ENCODE measurements at regions of chr6 and their contacts with region 1.

Region 1: DNA sequence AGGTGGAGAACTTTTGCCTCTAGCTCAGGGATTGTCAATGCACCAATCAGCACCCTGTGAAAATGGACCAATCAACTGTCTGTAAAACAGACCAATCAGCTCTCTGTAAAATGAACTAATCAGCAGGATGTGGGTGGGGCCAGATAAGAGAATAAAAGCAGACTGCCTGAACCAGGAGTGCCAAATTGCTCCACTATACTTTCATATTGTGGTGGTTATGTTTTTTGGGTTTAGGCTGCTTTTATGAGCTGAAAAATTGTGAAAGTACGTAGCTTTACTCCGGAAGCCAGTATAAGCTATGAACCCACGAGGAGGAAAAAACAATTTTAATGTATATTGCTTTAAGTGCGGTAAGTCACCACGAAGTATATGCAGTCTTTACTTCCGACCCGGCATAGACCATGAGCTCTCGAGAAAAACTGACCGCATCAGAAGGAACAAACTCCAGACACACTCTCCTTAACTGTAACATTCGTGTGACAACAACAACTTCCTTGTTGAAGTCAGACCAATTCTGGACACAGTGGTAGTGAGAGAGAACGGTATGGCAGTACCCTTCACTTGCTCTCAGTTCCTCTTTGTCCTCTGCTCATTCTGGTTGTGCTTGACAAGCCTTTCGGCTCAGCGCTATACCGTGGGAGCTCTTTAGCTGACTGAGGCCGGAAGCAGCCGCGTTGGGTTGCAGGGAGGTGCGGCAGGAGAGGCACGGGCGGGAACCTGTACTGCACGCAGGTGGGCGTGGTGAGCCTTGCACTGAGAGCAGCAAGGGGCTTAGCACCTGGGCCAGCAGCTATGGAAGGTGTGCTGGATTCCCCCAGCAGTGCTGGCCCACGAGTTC is 81.9 kb upstream of the E2F3 start:
- DNase-seq: peak; percentile 38 to 89 (median 79)
- ATAC-seq: peak; percentile 90
- H3K4me3 ChIP-seq: peak overlapping the region; percentile 68
- H3K4me3 Mint-ChIP-seq: peak overlapping the region; percentile 77 to 95 (median 90)
- H3K27ac ChIP-seq: peak overlapping the region; percentile 71
- H3K27ac Mint-ChIP-seq: peak overlapping the region; percentile 89 to 99 (median 95)
- H3K4me1 ChIP-seq: peaks cover 5 to 6% of the 10 kb centered on the region in 2 donors
- H3K4me1 Mint-ChIP-seq: peaks cover 5 to 27% (median 18%) of the 10 kb centered on the region in 7 donors
- H3K27me3 ChIP-seq: no peaks in the 10 kb centered on the region
- H3K27me3 Mint-ChIP-seq: peaks cover 0 to 18% (median 0%) of the 10 kb centered on the region in 5 donors

Region 2: GRCh38 chr6:20212392-20213217 is 107.1 kb before region 1 on chr6 and contains the start of gene MBOAT1:
- CTCF ChIA-PET with region 1: no interaction called
- POLR2A ChIA-PET with region 1: interaction called, 3 read pairs
- intact Hi-C with region 1: loop called in 1 of 2 experiments (anchors 2 kb)
- DNase-seq: peak; percentile 38 to 85 (median 54)
- ATAC-seq: peak; percentile 82
- H3K4me3 ChIP-seq: peak within 1 kb of the TSS; percentile 73
- H3K4me3 Mint-ChIP-seq: peak within 1 kb of the TSS; percentile 82 to 99 (median 96)
- H3K27ac ChIP-seq: peak within 1 kb of the TSS; percentile 62
- H3K27ac Mint-ChIP-seq: peak within 1 kb of the TSS; percentile 56 to 94 (median 91)
- H3K4me1 ChIP-seq: peaks cover 11 to 20% of the 10 kb centered on the region in 2 donors
- H3K4me1 Mint-ChIP-seq: peaks cover 18 to 41% (median 27%) of the 10 kb centered on the region in 7 donors
- H3K27me3 ChIP-seq: no peaks in the 10 kb centered on the region
- H3K27me3 Mint-ChIP-seq: peaks cover 0 to 5% (median 0%) of the 10 kb centered on the region in 5 donors
- total RNA-seq, gene MBOAT1: 6.2 to 24.7 (median 10.0) TPM

Region 3: GRCh38 chr6:20229881-20230280 is 89.9 kb before region 1 on chr6:
- CTCF ChIA-PET with region 1: no interaction called
- POLR2A ChIA-PET with region 1: no interaction called
- intact Hi-C with region 1: no loop called
- DNase-seq: no peak
- ATAC-seq: no peak
- H3K4me3 ChIP-seq: no peak overlapping the region
- H3K4me3 Mint-ChIP-seq: no peak overlapping the region
- H3K27ac ChIP-seq: no peak overlapping the region
- H3K27ac Mint-ChIP-seq: no peak overlapping the region
- H3K4me1 ChIP-seq: no peaks in the 10 kb centered on the region
- H3K4me1 Mint-ChIP-seq: no peaks in the 10 kb centered on the region
- H3K27me3 ChIP-seq: no peaks in the 10 kb centered on the region
- H3K27me3 Mint-ChIP-seq: peaks cover 0 to 16% (median 0%) of the 10 kb centered on the region in 5 donors

Region 4: DNA sequence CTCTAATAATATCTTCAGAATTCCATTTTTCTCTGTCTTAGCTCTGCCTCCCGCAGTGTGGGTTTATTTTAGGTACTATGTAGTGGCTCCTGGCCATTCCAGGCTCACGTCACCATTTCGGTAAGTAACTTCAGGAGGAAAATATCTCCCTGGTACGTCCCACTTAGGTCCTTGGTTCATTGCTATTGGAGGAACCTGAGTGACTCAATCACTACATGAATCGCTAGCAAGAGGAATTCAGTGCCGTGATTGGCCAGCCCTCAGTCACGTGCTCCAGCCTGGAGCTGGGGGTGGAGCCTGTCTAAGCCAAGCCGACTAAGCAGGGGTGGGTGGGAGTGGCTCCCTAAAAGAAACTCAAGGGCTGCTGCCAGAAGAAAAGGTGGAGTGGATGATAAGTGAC is 14.6 kb after region 1 on chr6:
- CTCF ChIA-PET with region 1: interaction called, 4 read pairs
- POLR2A ChIA-PET with region 1: interaction called, 50 read pairs
- intact Hi-C with region 1: loop called (anchors 1 to 2 kb)
- DNase-seq: no peak
- ATAC-seq: no peak
- H3K4me3 ChIP-seq: no peak overlapping the region
- H3K4me3 Mint-ChIP-seq: no peak overlapping the region
- H3K27ac ChIP-seq: no peak overlapping the region
- H3K27ac Mint-ChIP-seq: no peak overlapping the region
- H3K4me1 ChIP-seq: peaks cover 0 to 11% of the 10 kb centered on the region in 2 donors
- H3K4me1 Mint-ChIP-seq: peaks cover 12 to 39% (median 33%) of the 10 kb centered on the region in 7 donors
- H3K27me3 ChIP-seq: no peaks in the 10 kb centered on the region
- H3K27me3 Mint-ChIP-seq: peaks cover 0 to 12% (median 0%) of the 10 kb centered on the region in 5 donors

Region 5: GRCh38 chr6:20350215-20350614 is 30.5 kb after region 1 on chr6:
- CTCF ChIA-PET with region 1: no interaction called
- POLR2A ChIA-PET with region 1: interaction called, 10 read pairs
- intact Hi-C with region 1: no loop called
- DNase-seq: no peak
- ATAC-seq: no peak
- H3K4me3 ChIP-seq: no peak overlapping the region
- H3K4me3 Mint-ChIP-seq: no peak overlapping the region
- H3K27ac ChIP-seq: no peak overlapping the region
- H3K27ac Mint-ChIP-seq: peak overlapping the region in 1 of 9 donors; percentile 37
- H3K4me1 ChIP-seq: no peaks in the 10 kb centered on the region
- H3K4me1 Mint-ChIP-seq: peaks cover 0 to 23% (median 0%) of the 10 kb centered on the region in 7 donors
- H3K27me3 ChIP-seq: no peaks in the 10 kb centered on the region
- H3K27me3 Mint-ChIP-seq: peaks cover 0 to 10% (median 0%) of the 10 kb centered on the region in 5 donors

Region 6: DNA sequence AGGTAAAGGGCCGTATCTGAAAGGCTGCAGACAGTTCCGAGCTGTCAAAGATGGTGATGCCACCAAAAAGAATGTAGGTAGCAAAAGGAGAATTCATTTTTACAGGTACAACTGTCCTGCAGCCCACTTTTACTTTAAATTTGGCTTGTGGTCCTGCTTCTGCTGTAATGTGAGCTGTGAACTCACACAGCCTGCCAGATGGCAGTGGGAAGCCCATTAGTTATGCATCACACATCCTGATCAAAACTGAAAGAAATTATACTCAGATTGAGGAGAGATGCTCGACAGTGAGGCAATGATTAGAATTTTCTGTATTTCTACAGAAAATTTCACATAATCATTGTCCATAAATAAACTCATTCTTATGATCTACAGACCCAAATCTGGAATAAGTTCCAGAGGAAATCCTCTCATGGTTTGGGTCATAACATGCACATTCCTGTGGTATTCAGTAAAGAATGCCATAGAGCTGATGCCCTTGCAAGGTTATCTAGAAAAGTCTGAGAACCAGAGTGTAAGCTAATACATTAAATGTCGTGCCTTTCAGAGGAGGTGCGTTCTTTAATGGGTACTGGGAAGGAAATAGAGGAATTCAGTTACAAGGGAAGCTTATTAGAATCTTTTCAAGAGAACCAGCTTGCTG is 58.0 kb after region 1 on chr6:
- CTCF ChIA-PET with region 1: no interaction called
- POLR2A ChIA-PET with region 1: interaction called, 20 read pairs
- intact Hi-C with region 1: no loop called
- DNase-seq: no peak
- ATAC-seq: peak; percentile 49
- H3K4me3 ChIP-seq: no peak overlapping the region
- H3K4me3 Mint-ChIP-seq: peak overlapping the region in 1 of 10 donors; percentile 40
- H3K27ac ChIP-seq: no peak overlapping the region
- H3K27ac Mint-ChIP-seq: peak overlapping the region in 2 of 9 donors; percentile 63 to 71
- H3K4me1 ChIP-seq: peaks cover 11 to 14% of the 10 kb centered on the region in 2 donors
- H3K4me1 Mint-ChIP-seq: peaks cover 8 to 28% (median 25%) of the 10 kb centered on the region in 7 donors
- H3K27me3 ChIP-seq: no peaks in the 10 kb centered on the region
- H3K27me3 Mint-ChIP-seq: peaks cover 0 to 2% (median 0%) of the 10 kb centered on the region in 5 donors

Measured in naive thymus-derived CD4-positive, alpha-beta T cell (primary cell).